Mammary epithelial cell (primary cell): ENCODE measurements at regions of chr2 and their contacts with region 1.

Region 1: GRCh38 chr2:186544255-186544675 is 45.6 kb upstream of the ITGAV start:
- DNase-seq: peak; percentile 96
- H3K4me3 ChIP-seq: peak overlapping the region in 1 of 3 experiments; percentile 39
- H3K27ac ChIP-seq: peak overlapping the region; percentile 98
- H3K4me1 ChIP-seq: peaks cover 43% of the 10 kb centered on the region
- H3K27me3 ChIP-seq: no peaks in the 10 kb centered on the region
- CTCF ChIP-seq: no peak

Region 2: DNA sequence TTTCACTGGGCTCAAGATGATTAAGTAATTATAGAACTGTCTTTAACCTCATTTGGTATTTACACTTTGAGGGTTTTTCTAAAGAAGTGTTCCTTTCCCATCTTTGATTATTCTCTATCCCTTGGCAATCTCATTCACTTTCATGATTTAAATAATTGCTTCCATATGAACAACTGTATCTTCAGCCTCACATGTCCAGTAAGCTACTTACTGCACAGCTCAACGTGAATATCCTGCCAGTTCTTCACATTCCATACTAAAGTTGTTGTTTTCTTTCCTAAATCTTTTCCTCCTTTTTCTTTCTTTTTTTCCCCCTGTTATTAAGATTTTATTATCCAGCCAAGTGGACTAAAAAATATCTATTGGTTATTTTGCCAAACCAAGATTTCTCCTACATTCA is 20.5 kb before region 1 on chr2:
- CTCF ChIA-PET with region 1: no interaction called
- dilution Hi-C with region 1: no loop called
- in situ Hi-C with region 1: no loop called
- intact Hi-C with region 1: loop called (anchors 2 kb)
- DNase-seq: no peak
- H3K4me3 ChIP-seq: no peak overlapping the region
- H3K27ac ChIP-seq: no peak overlapping the region
- H3K4me1 ChIP-seq: no peaks in the 10 kb centered on the region
- H3K27me3 ChIP-seq: no peaks in the 10 kb centered on the region
- CTCF ChIP-seq: no peak

Region 3: GRCh38 chr2:186575302-186575701 is 31.0 kb after region 1 on chr2:
- CTCF ChIA-PET with region 1: interaction called, 7 read pairs
- dilution Hi-C with region 1: no loop called
- in situ Hi-C with region 1: no loop called
- intact Hi-C with region 1: loop called (anchors 2 kb)
- DNase-seq: peak; percentile 97
- H3K4me3 ChIP-seq: no peak overlapping the region
- H3K27ac ChIP-seq: peak overlapping the region; percentile 67
- H3K4me1 ChIP-seq: peaks cover 27% of the 10 kb centered on the region
- H3K27me3 ChIP-seq: no peaks in the 10 kb centered on the region
- CTCF ChIP-seq: no peak